ENCODE measurements at regions of chr1 and their contacts with region 1.

Region 1: GRCh38 chr1:18681423-18681835 is 50.8 kb downstream of the PAX7 start:
- DNase-seq: no peak
- H3K4me3 ChIP-seq: no peak overlapping the region
- H3K27ac ChIP-seq: no peak overlapping the region
- H3K4me1 ChIP-seq: peaks cover 3 to 8% (median 8%) of the 10 kb centered on the region in 4 experiments; a peak in 6 of 7 replicates
- H3K27me3 ChIP-seq: peaks cover 0 to 28% (median 14%) of the 10 kb centered on the region in 4 experiments; a peak in 6 of 7 replicates
- CTCF ChIP-seq: peak; percentile 31 to 89 (median 72)
- EP300 ChIP-seq: no peak
- POLR2A ChIP-seq: no peak
- RAD21 ChIP-seq: peak; percentile 83 to 91

Region 2: GRCh38 chr1:18526436-18527275 is 154.8 kb before region 1 on chr1:
- CTCF ChIA-PET with region 1: no interaction called
- POLR2A ChIA-PET with region 1: no interaction called
- DNase-seq: no peak
- H3K4me3 ChIP-seq: no peak overlapping the region
- H3K27ac ChIP-seq: no peak overlapping the region
- H3K4me1 ChIP-seq: no peaks in the 10 kb centered on the region; a peak in 1 of 7 replicates
- H3K27me3 ChIP-seq: peaks cover 0 to 6% (median 0%) of the 10 kb centered on the region in 4 experiments; a peak in 3 of 7 replicates
- CTCF ChIP-seq: no peak
- EP300 ChIP-seq: no peak
- POLR2A ChIP-seq: no peak
- RAD21 ChIP-seq: no peak

Region 3: DNA sequence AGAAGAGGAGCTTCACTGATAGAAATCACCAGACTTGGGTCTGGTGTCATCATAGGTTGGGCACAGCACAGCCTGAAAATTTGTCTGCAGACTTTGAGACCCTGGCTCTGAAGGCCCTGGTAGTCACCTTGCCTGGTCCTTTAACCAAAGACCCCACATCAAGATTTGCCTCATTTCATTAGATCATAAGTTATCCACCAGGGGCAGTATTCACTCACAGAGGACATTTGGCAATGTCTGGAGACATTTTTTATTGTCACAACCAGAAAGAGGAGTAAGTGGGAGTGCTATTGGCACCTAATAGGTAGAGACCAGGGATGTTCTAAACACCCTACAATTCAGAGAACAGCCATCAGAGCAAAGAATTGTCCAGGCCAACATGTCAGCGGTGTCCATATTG is 72.9 kb before region 1 on chr1:
- CTCF ChIA-PET with region 1: interaction called, 22 read pairs
- POLR2A ChIA-PET with region 1: interaction called, 4 read pairs
- DNase-seq: no peak
- H3K4me3 ChIP-seq: no peak overlapping the region
- H3K27ac ChIP-seq: no peak overlapping the region
- H3K4me1 ChIP-seq: peaks cover 0 to 5% (median 0%) of the 10 kb centered on the region in 4 experiments; a peak in 2 of 7 replicates
- H3K27me3 ChIP-seq: peaks cover 0 to 2% (median under 1%) of the 10 kb centered on the region in 4 experiments; a peak in 1 of 7 replicates
- CTCF ChIP-seq: peak in 2 of 3 experiments; percentile 38; a peak in 2 of 4 replicates
- EP300 ChIP-seq: no peak
- POLR2A ChIP-seq: no peak
- RAD21 ChIP-seq: peak; percentile 46 to 60

Region 4: DNA sequence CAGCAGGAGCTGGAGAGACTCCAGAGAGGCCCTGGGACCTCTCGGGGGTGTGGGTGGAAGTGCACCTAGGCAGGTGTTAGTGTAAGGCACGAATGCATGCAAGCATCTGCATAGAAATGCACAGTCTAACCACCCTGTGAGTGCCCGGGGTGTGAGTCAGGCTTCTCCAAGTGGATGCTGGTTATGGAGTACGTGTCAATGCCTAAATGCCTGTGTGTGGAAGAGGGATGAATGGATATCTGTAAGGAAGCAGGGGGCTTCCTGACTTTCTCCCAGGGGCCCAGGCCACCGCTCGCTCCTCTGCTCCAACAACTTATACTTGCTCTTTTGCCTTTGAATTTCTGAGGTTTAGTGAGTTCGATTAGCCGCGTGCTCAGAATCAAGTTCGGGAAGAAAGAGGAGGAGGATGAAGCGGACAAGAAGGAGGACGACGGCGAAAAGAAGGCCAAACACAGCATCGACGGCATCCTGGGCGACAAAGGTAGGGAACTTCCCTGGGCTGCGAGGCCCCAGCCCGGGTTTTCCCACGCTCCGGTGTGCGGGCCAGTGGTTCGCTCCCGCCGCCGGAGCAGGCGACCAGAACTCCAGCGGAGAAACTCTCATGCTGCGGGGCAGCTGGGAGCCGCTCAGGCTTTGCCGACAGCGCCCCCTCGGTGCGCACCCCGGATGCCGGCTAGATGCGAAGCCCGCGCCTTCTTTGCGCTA is 45.4 kb before region 1 on chr1:
- CTCF ChIA-PET with region 1: interaction called, 24 read pairs
- POLR2A ChIA-PET with region 1: no interaction called
- DNase-seq: peak in 1 of 2 experiments; percentile 78
- H3K4me3 ChIP-seq: peak overlapping the region in 1 of 4 experiments; percentile 52; a peak in 3 of 8 replicates
- H3K27ac ChIP-seq: no peak overlapping the region
- H3K4me1 ChIP-seq: peaks cover 9 to 60% (median 21%) of the 10 kb centered on the region in 4 experiments
- H3K27me3 ChIP-seq: peaks cover 85 to 96% (median 92%) of the 10 kb centered on the region in 4 experiments
- CTCF ChIP-seq: peak; percentile 29 to 44 (median 40)
- EP300 ChIP-seq: no peak
- POLR2A ChIP-seq: no peak
- RAD21 ChIP-seq: no peak; a peak in 1 of 4 replicates

Region 5: GRCh38 chr1:18668796-18669404 is 12.5 kb before region 1 on chr1:
- CTCF ChIA-PET with region 1: interaction called, 207 read pairs
- POLR2A ChIA-PET with region 1: interaction called, 6 read pairs
- DNase-seq: no peak
- H3K4me3 ChIP-seq: no peak overlapping the region
- H3K27ac ChIP-seq: no peak overlapping the region
- H3K4me1 ChIP-seq: peaks cover 0 to 5% (median 1%) of the 10 kb centered on the region in 4 experiments; a peak in 4 of 7 replicates
- H3K27me3 ChIP-seq: peaks cover 0 to 22% (median 10%) of the 10 kb centered on the region in 4 experiments; a peak in 3 of 7 replicates
- CTCF ChIP-seq: no peak
- EP300 ChIP-seq: no peak
- POLR2A ChIP-seq: no peak
- RAD21 ChIP-seq: no peak

Measured in H1 (cell line).